ENCODE measurements at regions of chr10 and their contacts with region 1.

Region 1: DNA sequence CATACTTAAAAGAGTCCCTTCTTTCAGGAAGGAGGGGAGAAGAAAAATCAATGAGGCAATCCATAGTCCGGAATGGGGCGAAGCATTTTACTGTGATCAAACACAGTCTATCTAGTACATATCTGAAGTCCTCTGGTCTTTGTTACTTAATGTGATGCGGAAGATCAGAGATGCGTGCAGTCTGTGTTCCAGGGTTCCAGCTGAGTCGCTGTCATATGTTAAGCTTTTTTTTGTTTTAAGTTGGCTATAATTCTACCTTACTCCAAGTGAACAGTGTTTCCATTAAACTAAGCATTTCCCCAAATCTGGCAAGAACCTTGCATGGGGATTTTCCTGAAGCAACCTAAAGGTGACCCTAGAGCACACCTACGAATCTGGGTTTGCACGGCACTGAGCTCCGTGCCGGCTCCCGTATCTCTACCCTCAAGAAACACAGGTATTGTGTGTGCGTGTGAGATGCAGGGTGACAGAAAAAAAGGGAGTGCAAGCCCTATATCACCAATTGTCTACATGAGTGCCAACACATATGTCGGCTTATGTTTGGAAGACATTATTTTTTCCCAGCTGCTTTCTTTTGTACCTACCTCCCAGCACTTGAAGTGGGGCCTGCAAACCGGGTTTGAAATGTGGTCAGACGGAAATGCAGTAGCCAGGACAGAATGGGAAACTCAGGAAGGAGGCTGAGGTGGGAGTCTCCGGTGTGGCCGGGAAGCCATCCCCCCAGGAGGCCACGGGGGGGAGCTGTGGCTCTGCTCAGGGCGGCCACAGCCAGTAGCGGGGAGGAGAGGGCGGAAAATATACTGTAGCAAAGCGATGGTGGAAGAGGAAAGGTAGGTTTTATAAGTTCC is 435.8 kb upstream of the MGMT start:
- DNase-seq: peak; percentile 39
- H3K4me3 ChIP-seq: no peak overlapping the region
- H3K27ac ChIP-seq: no peak overlapping the region
- H3K4me1 ChIP-seq: no peaks in the 10 kb centered on the region
- H3K27me3 ChIP-seq: peaks cover 2% of the 10 kb centered on the region
- CTCF ChIP-seq: peak; percentile 45 to 85 (median 82)
- POLR2A ChIP-seq: no peak

Region 2: GRCh38 chr10:129416956-129417765 is 385.9 kb after region 1 on chr10:
- intact Hi-C with region 1: no loop called
- DNase-seq: no peak
- H3K4me3 ChIP-seq: no peak overlapping the region
- H3K27ac ChIP-seq: no peak overlapping the region
- H3K4me1 ChIP-seq: no peaks in the 10 kb centered on the region
- H3K27me3 ChIP-seq: no peaks in the 10 kb centered on the region
- CTCF ChIP-seq: no peak
- POLR2A ChIP-seq: no peak

Region 3: GRCh38 chr10:129971381-129972144 is 940.3 kb after region 1 on chr10:
- intact Hi-C with region 1: loop called (anchors 5 kb)
- DNase-seq: peak; percentile 48
- H3K4me3 ChIP-seq: peak overlapping the region in 1 of 2 donors; percentile 9
- H3K27ac ChIP-seq: no peak overlapping the region
- H3K4me1 ChIP-seq: no peaks in the 10 kb centered on the region
- H3K27me3 ChIP-seq: peaks cover 56% of the 10 kb centered on the region
- CTCF ChIP-seq: peak; percentile 42 to 66 (median 47)
- POLR2A ChIP-seq: no peak

Region 4: DNA sequence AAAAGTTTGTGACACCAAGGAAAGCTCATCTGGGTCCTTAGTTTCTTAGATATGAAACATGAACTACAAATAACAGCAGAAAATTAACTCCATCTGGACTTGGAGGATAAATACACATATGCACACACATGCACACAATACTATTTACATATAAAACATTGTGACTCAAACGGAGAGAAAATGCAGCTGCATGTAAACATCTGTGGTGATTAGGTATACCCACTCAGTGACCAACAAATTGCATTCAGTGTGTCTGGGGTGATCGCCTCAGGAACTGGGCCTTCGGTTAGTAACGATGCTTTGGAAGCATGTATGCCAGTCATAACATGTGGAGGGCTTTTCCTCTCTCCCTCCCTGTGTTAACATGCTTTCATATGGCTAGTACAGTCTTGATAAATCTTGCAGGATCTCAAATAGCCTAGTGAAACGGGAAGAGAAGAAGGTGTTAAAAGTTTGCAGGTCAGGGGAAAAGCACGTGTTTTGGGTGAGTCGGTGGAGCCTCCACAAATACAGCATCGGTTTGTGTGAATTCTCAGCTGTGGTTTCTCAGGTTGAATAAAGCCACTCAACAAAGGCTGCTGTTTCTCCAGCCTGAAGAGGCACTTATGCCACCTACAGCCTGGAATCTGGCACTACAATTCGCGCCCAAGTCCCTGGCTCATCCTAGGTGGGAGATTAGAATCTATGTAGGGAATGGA is 1096.3 kb after region 1 on chr10:
- intact Hi-C with region 1: loop called (anchors 10 kb)
- DNase-seq: peak; percentile 55
- H3K4me3 ChIP-seq: no peak overlapping the region
- H3K27ac ChIP-seq: no peak overlapping the region
- H3K4me1 ChIP-seq: no peaks in the 10 kb centered on the region
- H3K27me3 ChIP-seq: no peaks in the 10 kb centered on the region
- CTCF ChIP-seq: peak in 3 of 4 experiments; percentile 44 to 68 (median 62)
- POLR2A ChIP-seq: no peak